HCT116 (cell line): ENCODE measurements at regions of chr1 and their contacts with region 1.

Region 1: GRCh38 chr1:21368515-21369289 is 71.2 kb upstream of the NBPF3 start:
- DNase-seq: peak; percentile 77
- ATAC-seq: peak; percentile 97
- H3K4me3 ChIP-seq: no peak overlapping the region
- H3K27ac ChIP-seq: no peak overlapping the region
- H3K4me1 ChIP-seq: peaks cover 0 to 11% of the 10 kb centered on the region in 2 experiments; a peak in 2 of 4 replicates
- H3K27me3 ChIP-seq: no peaks in the 10 kb centered on the region
- CTCF ChIP-seq: peak; percentile 98 to 100 (median 99)
- POLR2A ChIP-seq: no peak
- RAD21 ChIP-seq: peak; percentile 100

Region 2: GRCh38 chr1:21154717-21155116 is 214.0 kb before region 1 on chr1:
- CTCF ChIA-PET with region 1: no interaction called
- POLR2A ChIA-PET with region 1: no interaction called
- RAD21 ChIA-PET with region 1: no interaction called
- intact Hi-C with region 1: no loop called
- DNase-seq: no peak
- ATAC-seq: no peak
- H3K4me3 ChIP-seq: no peak overlapping the region
- H3K27ac ChIP-seq: no peak overlapping the region
- H3K4me1 ChIP-seq: peaks cover 35 to 48% of the 10 kb centered on the region in 2 experiments
- H3K27me3 ChIP-seq: no peaks in the 10 kb centered on the region
- CTCF ChIP-seq: no peak
- POLR2A ChIP-seq: no peak
- RAD21 ChIP-seq: no peak

Region 3: GRCh38 chr1:21200767-21201166 is 167.9 kb before region 1 on chr1:
- CTCF ChIA-PET with region 1: interaction called, 18 read pairs
- POLR2A ChIA-PET with region 1: no interaction called
- RAD21 ChIA-PET with region 1: no interaction called
- intact Hi-C with region 1: no loop called
- DNase-seq: no peak
- ATAC-seq: no peak
- H3K4me3 ChIP-seq: no peak overlapping the region
- H3K27ac ChIP-seq: no peak overlapping the region
- H3K4me1 ChIP-seq: no peaks in the 10 kb centered on the region
- H3K27me3 ChIP-seq: no peaks in the 10 kb centered on the region
- CTCF ChIP-seq: no peak
- POLR2A ChIP-seq: no peak
- RAD21 ChIP-seq: no peak

Region 4: DNA sequence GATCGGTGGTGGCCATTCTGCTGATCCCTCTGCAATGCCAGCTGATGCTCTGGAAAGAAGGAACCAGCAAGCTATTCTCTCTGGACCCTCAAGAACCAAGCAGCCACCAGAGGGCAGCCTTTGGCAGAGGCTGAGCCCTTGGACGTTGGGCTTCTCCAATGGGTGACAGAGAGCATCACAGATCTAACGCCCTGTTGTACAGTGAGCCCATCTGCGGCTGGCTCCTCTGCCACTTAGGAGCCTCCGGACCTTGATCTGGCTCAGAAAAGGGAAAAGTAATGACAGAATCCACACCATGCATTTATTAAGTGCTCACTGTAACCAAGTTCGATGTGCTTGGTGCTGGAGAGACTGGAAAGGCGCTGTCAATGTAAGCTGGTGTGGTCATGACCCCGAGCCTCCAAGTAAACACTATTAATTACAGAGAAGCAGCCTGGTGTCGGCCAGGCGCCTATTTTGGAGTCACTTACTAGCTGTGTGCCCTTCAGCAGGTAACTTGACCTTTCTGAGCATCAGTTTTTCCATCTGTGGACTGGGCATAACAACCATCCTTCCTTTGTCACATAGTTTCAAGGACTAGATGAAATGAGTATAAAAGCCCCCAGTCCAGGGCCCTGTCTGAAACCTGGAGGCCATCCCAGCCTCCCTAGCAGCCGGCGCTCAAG is 113.3 kb before region 1 on chr1:
- CTCF ChIA-PET with region 1: interaction called, 94 read pairs
- POLR2A ChIA-PET with region 1: interaction called, 3 read pairs
- RAD21 ChIA-PET with region 1: interaction called, 22 to 35 read pairs
- intact Hi-C with region 1: loop called (anchors 1 kb)
- DNase-seq: peak; percentile 68
- ATAC-seq: peak; percentile 96
- H3K4me3 ChIP-seq: no peak overlapping the region
- H3K27ac ChIP-seq: no peak overlapping the region
- H3K4me1 ChIP-seq: peaks cover 14% of the 10 kb centered on the region in 2 experiments
- H3K27me3 ChIP-seq: no peaks in the 10 kb centered on the region
- CTCF ChIP-seq: peak; percentile 86 to 92 (median 86)
- POLR2A ChIP-seq: no peak
- RAD21 ChIP-seq: peak; percentile 93

Region 5: DNA sequence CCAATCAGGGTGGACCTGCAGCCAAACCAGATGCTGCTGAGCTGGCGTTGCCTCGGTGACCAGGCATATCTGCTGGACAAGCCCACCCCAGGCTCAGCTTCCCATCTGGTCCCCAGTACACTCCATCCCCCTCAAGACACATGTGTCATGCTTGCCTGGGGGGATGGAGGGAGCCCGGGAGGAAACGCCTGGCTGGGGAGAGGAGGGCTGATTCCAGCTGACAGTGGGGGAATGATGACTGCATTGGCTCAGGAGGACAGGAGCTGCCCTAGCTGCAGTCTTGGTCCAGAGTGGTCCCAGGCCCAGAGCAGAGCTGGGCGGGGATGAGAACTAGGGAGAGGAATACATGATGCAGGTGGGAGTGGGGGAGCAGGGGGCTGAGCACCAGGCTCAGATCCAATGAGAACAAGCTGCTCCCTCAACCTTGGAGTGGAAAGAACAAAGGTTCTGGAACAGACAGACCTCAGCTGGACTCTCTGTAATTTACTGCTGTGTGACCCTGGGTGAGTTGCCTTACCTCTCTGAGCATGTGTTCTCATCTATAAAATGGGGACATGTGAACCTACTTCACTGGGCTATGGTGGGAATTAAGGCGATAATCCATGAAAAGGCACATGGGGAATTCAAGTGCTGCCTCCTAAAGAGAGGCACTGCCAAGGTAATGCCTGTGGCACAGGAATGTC is 55.4 kb before region 1 on chr1:
- CTCF ChIA-PET with region 1: no interaction called
- POLR2A ChIA-PET with region 1: no interaction called
- RAD21 ChIA-PET with region 1: no interaction called
- intact Hi-C with region 1: no loop called
- DNase-seq: no peak
- ATAC-seq: no peak
- H3K4me3 ChIP-seq: no peak overlapping the region
- H3K27ac ChIP-seq: no peak overlapping the region
- H3K4me1 ChIP-seq: peaks cover 18 to 32% of the 10 kb centered on the region in 2 experiments; a peak in 2 of 4 replicates
- H3K27me3 ChIP-seq: no peaks in the 10 kb centered on the region
- CTCF ChIP-seq: no peak
- POLR2A ChIP-seq: no peak
- RAD21 ChIP-seq: no peak

Region 6: GRCh38 chr1:21324368-21325141 is 44.1 kb before region 1 on chr1:
- CTCF ChIA-PET with region 1: interaction called, 11 read pairs
- POLR2A ChIA-PET with region 1: no interaction called
- RAD21 ChIA-PET with region 1: interaction called in 1 of 2 experiments, 9 read pairs
- intact Hi-C with region 1: no loop called
- DNase-seq: peak; percentile 94
- ATAC-seq: peak; percentile 90
- H3K4me3 ChIP-seq: peak overlapping the region; percentile 20 to 42
- H3K27ac ChIP-seq: peak overlapping the region; percentile 84
- H3K4me1 ChIP-seq: peaks cover 73 to 94% of the 10 kb centered on the region in 2 experiments
- H3K27me3 ChIP-seq: no peaks in the 10 kb centered on the region
- CTCF ChIP-seq: no peak
- POLR2A ChIP-seq: no peak
- RAD21 ChIP-seq: no peak

Region 7: DNA sequence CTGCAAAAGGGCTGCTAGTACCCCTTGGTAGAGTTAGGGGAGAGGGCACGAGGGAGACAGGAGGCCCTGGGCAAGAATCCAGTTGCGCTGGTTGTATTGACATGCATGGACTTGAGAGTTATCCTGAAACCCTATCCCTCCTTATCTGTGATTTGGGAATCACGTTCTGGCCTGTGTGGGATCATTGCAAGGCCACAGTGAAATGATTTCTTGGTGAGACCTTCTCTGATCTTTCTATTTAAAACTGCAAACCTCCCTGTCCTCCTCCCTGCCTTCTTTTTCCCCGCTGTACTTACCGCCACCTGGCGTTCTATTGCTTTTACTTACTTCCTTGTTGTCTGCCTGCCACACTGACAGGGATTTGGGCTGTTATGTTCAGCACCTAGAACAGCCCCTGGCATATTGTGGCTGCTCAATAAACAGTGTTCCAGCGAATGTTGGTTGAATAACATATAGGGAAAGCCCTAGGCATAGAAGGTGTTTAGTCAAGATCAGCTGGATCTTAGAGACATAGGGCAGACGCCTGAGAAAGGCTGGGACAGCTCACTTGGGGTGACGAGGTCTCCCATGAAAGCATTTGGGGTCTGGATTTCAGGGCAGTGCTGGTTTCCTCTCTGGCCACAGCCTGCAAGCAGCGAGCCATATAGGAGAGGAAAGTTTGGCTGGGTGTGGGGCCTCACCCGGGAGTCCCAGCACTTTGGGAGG is 166.1 kb after region 1 on chr1:
- CTCF ChIA-PET with region 1: interaction called, 11 read pairs
- POLR2A ChIA-PET with region 1: no interaction called
- RAD21 ChIA-PET with region 1: interaction called, 3 to 4 read pairs
- intact Hi-C with region 1: loop called (anchors 2 kb)
- DNase-seq: peak; percentile 29
- ATAC-seq: peak; percentile 88
- H3K4me3 ChIP-seq: no peak overlapping the region
- H3K27ac ChIP-seq: no peak overlapping the region
- H3K4me1 ChIP-seq: peaks cover 0 to 2% of the 10 kb centered on the region in 2 experiments; a peak in 1 of 4 replicates
- H3K27me3 ChIP-seq: 0 out of 2 replicates have a peak, but pooled peaks cover 4% of the 10 kb centered on the region
- CTCF ChIP-seq: peak; percentile 69 to 76 (median 72)
- POLR2A ChIP-seq: no peak
- RAD21 ChIP-seq: peak; percentile 75

Region 8: DNA sequence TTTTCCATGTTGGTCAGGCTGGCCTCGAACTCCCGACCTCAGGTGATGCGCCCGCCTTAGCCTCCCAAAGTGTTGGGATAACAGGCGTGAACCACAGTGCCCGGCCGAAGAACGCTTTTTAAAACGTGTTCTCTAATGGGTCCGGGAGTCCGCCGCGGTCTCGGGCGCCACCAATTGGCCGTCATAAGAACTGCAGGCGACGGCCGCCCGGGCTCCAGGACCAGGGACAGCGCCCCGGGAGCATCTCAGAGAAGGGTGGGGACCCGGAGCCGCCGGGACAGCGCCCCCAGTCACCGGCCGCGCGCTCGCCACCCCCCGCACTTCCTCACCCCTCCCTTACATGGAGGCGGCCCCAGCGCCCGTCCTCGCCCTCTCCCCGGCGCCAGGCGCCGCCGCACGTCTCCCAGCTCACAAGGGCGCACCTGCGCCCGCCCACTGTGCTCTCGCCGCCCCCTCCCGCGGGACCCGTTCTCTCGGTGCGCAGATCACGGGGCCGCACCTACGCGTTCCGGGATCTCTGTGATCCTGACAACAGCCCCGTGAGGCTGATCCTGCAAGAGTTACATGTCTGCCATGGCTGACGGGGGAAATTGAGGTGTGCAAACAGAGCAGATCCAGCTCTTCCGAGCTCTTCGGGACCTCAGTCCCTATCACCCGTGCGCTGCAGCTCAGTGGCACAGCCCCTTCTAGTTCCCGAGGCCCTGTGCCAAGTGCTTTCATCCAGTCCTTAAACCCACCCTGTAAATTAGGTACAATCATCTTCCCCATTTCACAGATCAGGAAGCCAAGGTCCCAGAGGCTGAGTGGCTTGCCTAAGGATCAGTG is 290.6 kb after region 1 on chr1:
- CTCF ChIA-PET with region 1: interaction called, 4 read pairs
- POLR2A ChIA-PET with region 1: no interaction called
- RAD21 ChIA-PET with region 1: interaction called in 1 of 2 experiments, 7 read pairs
- intact Hi-C with region 1: loop called (anchors 5 kb)
- DNase-seq: peak; percentile 51
- ATAC-seq: peak; percentile 83
- H3K4me3 ChIP-seq: peak overlapping the region; percentile 31 to 51
- H3K27ac ChIP-seq: peak overlapping the region; percentile 29; the same call in 1 of the 2 replicates
- H3K4me1 ChIP-seq: peaks cover 5 to 26% of the 10 kb centered on the region in 2 experiments; a peak in 3 of 4 replicates
- H3K27me3 ChIP-seq: no peaks in the 10 kb centered on the region
- CTCF ChIP-seq: peak; percentile 82 to 89 (median 86); a peak in 5 of 6 replicates
- POLR2A ChIP-seq: no peak
- RAD21 ChIP-seq: peak; percentile 95